B cell (primary cell): ENCODE measurements at regions of chr10 and their contacts with region 1.

Region 1: GRCh38 chr10:102476466-102477141 is 25.3 kb upstream of the C10orf95 start:
- DNase-seq: no peak
- ATAC-seq: no peak
- H3K4me3 ChIP-seq: no peak overlapping the region
- H3K4me3 Mint-ChIP-seq: no peak overlapping the region
- H3K27ac ChIP-seq: no peak overlapping the region
- H3K27ac Mint-ChIP-seq: no peak overlapping the region
- H3K4me1 ChIP-seq: peaks cover 0 to 7% of the 10 kb centered on the region in 2 donors
- H3K4me1 Mint-ChIP-seq: peaks cover 7% of the 10 kb centered on the region
- H3K27me3 ChIP-seq: no peaks in the 10 kb centered on the region
- H3K27me3 Mint-ChIP-seq: no peaks in the 10 kb centered on the region
- CTCF ChIP-seq: no peak

Region 2: GRCh38 chr10:102167861-102168260 is 308.7 kb before region 1 on chr10:
- CTCF ChIA-PET with region 1: interaction called, 9 read pairs
- POLR2A ChIA-PET with region 1: no interaction called
- intact Hi-C with region 1: loop called (anchors 1 kb)
- DNase-seq: no peak
- ATAC-seq: no peak
- H3K4me3 ChIP-seq: no peak overlapping the region
- H3K4me3 Mint-ChIP-seq: no peak overlapping the region
- H3K27ac ChIP-seq: no peak overlapping the region
- H3K27ac Mint-ChIP-seq: no peak overlapping the region
- H3K4me1 ChIP-seq: peaks cover 7 to 8% of the 10 kb centered on the region in 2 donors
- H3K4me1 Mint-ChIP-seq: peaks cover 6% of the 10 kb centered on the region
- H3K27me3 ChIP-seq: no peaks in the 10 kb centered on the region
- H3K27me3 Mint-ChIP-seq: no peaks in the 10 kb centered on the region
- CTCF ChIP-seq: no peak

Region 3: DNA sequence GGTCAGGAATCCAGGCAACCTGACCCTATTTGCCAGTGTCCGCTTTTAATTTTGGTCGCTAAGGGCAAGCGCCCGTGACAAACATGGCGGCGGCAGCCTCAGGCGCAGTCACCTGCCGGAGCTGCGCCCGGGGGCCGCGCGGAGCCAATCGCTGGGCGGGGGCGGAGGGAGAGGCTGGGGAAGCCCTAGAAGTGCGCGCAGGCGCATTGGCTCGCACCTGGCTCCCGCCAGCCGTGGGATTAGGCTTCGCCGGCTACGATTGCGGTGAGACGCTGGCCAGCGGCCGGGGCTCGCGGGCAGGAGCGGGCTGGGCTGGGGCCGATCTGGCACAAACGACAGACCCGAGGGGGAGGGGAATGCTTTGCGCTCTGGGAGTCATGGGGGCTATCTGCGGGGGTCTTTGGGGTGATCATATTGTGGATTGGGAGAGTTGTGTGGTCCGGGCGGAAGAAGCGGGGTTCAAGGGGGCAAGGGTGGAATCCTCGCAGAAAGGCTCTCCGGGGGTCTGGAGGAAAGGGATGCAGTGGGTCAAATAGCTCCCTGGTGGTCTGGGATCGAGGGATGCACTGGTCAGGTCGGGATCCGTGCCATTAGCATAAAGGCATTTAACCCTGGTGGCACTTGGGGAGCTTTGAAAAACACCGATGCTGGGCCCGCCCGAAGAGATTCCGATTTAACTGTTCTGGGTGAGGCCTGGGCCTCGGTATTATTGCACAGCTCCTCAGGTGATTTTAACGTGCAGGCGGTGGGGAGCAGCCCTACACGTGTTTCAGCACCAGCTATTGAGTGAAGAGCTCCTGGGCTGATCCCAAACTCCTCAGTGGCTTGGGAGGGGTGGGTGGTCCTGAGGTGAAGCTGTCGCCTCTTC is 15.2 kb before region 1 on chr10:
- CTCF ChIA-PET with region 1: interaction called, 36 read pairs
- POLR2A ChIA-PET with region 1: no interaction called
- intact Hi-C with region 1: no loop called
- DNase-seq: peak; percentile 95
- ATAC-seq: peak; percentile 99
- H3K4me3 ChIP-seq: peak overlapping the region; percentile 34 to 76 (median 68)
- H3K4me3 Mint-ChIP-seq: peak overlapping the region; percentile 85
- H3K27ac ChIP-seq: peak overlapping the region; percentile 17 to 71
- H3K27ac Mint-ChIP-seq: peak overlapping the region; percentile 76
- H3K4me1 ChIP-seq: peaks cover 17 to 23% of the 10 kb centered on the region in 2 donors
- H3K4me1 Mint-ChIP-seq: peaks cover 29% of the 10 kb centered on the region
- H3K27me3 ChIP-seq: peaks cover 0 to 4% (median 0%) of the 10 kb centered on the region in 4 experiments
- H3K27me3 Mint-ChIP-seq: no peaks in the 10 kb centered on the region
- CTCF ChIP-seq: no peak